ENCODE measurements at regions of chr6 and their contacts with region 1.

Region 1: DNA sequence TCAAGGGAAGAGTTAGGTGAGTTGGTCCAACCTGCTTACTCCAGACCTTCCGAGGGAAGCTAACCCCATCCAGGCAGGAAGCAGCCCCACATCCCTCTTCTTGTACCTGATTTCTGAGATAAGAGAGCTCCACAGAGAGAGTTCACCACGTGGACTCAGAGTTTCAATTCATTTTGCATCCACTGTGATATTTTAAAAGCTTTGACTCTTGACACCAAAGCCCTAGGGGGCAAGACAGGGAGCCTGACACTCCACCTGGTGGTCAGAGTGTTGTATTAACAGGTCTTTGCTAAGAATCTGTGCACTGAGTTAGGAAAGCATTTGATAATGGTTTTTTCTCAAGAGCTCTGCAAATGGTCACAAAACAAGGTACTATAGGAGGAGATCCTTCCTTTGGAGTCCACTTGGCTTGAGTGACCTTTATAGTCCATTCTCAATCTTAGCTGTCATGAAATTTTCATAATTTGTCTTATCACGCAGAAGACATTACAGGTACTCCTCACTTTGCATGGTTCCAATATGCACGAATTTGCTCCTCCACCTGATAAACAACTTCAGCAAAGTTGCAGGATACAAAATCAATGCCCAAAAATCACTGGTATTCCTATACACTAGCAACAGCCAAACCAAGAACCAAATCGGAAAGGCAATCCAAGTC is 56.2 kb upstream of the RIPOR2 start:
- DNase-seq: peak; percentile 87
- ATAC-seq: peak; percentile 97
- H3K4me3 Mint-ChIP-seq: no peak overlapping the region
- H3K27ac Mint-ChIP-seq: peak overlapping the region; percentile 67
- H3K4me1 Mint-ChIP-seq: peaks cover 27% of the 10 kb centered on the region
- H3K27me3 Mint-ChIP-seq: no peaks in the 10 kb centered on the region

Region 2: DNA sequence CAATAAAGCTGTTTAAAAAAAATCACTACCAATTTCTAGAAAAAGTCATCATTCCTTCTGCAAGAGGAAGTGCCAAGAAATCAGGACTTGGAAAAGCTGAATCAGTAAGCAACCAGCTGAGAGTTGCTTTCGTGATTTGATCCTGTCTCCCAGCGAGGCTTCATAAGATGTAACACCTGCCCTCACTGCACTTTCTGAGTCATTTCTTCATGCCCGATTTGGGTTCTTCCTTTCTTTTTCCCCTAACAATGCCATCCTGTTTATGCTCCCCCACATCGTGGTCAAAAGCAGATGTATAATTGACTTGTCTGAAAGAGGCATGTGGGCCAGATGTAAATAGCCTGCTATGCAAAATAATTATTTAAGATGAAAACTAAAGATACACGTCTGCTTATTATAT is 108.3 kb before region 1 on chr6:
- CTCF ChIA-PET with region 1: interaction called, 10 read pairs
- DNase-seq: peak; percentile 57
- ATAC-seq: peak; percentile 74
- H3K4me3 Mint-ChIP-seq: no peak overlapping the region
- H3K27ac Mint-ChIP-seq: peak overlapping the region; percentile 64
- H3K4me1 Mint-ChIP-seq: peaks cover 46% of the 10 kb centered on the region
- H3K27me3 Mint-ChIP-seq: no peaks in the 10 kb centered on the region

Region 3: DNA sequence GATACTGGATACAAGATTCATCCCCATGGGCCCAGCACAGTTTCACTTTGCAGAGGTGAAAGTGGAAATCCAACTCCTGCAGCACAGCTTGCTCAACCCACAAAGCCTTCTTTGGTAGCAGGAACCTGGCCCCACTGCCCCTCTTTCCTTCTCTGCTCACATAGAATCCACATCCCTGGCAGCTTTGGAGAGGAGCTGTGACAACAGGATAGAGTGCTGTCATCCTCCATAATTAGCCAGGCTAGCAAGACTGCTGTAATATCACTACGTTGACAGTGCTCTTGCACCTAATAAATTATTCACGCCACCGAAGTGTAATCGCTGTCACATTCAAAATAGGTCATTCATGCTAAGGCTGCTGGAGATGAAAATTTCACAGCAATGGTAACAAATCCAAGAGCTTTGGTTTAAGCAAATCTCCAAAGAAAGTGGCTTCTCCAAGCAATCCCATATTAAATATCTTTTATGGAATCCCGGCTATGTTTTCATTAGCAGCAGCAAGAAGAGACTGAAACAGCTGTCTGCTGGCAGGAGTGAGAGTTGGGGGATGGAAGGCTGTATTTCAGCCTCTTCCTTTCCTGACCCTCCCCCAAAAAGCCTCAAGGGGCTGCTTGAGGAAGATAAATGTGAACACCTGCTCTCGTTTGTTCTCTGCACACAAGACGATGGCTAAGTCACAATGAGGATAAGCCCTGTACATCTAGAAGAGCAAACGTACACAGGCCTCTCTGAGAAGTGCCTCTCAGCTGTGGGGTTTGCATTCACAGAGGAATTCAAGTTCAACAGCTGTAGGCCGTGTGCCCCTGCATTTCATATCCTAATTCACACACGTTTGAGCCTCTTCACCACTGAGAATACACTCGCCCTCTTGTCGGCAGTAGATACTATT is 72.7 kb before region 1 on chr6:
- CTCF ChIA-PET with region 1: interaction called, 14 read pairs
- DNase-seq: no peak
- ATAC-seq: peak; percentile 40
- H3K4me3 Mint-ChIP-seq: peak overlapping the region; percentile 1
- H3K27ac Mint-ChIP-seq: peak overlapping the region; percentile 47
- H3K4me1 Mint-ChIP-seq: peaks cover 67% of the 10 kb centered on the region
- H3K27me3 Mint-ChIP-seq: no peaks in the 10 kb centered on the region

Region 4: DNA sequence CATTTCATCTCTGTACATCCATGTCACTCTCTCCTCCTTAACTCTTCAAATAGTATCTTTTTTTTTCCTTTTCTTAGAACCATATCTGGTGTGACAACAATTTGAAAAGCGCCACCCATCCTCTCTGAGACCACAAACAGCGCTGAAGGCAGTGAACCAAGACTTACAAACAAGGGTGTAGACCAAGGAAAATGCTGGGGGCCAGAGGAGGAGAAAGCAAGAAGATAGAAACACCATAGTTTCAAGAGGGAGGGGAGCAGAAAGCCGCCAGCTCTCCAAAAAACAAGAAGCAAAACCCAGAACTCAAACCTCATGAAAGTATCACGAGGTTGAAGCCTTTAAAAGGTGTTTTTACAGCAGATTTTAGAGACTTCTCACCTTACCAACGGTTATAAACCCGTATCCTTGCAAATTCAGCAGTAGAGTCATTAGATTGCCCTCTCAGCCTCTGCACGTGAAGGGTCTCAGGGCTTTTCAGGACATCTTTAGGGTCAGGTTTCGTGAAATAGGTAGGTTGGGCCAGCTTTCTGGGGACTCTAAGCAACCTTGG is 42.8 kb before region 1 on chr6:
- CTCF ChIA-PET with region 1: interaction called, 24 read pairs
- DNase-seq: peak; percentile 86
- ATAC-seq: peak; percentile 69
- H3K4me3 Mint-ChIP-seq: peak overlapping the region; percentile 46
- H3K27ac Mint-ChIP-seq: peak overlapping the region; percentile 96
- H3K4me1 Mint-ChIP-seq: peaks cover 66% of the 10 kb centered on the region
- H3K27me3 Mint-ChIP-seq: no peaks in the 10 kb centered on the region

Region 5: DNA sequence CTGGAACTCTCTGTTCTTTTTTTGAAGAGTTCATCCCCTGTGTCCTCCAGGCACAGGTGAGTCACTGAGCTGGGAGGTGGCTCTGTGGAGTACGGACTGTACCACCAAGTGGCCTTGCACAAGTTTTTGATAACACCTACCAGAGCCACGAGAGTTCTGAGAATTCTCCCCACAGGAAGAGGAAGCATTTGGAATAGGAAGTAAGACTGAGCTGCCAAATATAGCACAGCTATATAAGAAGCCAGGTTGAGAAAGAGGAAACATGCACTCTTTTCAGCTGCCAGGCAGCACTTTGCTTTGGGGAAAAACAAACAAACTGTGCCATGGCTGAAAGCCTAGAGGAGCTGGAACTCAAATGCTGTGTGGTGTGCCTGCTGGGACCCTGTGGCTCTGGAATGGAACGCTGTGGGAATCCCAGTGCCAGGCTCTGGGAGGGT is 14.6 kb after region 1 on chr6:
- CTCF ChIA-PET with region 1: interaction called, 75 read pairs
- DNase-seq: peak; percentile 85
- ATAC-seq: peak; percentile 79
- H3K4me3 Mint-ChIP-seq: peak overlapping the region; percentile 38
- H3K27ac Mint-ChIP-seq: peak overlapping the region; percentile 96
- H3K4me1 Mint-ChIP-seq: peaks cover 66% of the 10 kb centered on the region
- H3K27me3 Mint-ChIP-seq: no peaks in the 10 kb centered on the region

Region 6: DNA sequence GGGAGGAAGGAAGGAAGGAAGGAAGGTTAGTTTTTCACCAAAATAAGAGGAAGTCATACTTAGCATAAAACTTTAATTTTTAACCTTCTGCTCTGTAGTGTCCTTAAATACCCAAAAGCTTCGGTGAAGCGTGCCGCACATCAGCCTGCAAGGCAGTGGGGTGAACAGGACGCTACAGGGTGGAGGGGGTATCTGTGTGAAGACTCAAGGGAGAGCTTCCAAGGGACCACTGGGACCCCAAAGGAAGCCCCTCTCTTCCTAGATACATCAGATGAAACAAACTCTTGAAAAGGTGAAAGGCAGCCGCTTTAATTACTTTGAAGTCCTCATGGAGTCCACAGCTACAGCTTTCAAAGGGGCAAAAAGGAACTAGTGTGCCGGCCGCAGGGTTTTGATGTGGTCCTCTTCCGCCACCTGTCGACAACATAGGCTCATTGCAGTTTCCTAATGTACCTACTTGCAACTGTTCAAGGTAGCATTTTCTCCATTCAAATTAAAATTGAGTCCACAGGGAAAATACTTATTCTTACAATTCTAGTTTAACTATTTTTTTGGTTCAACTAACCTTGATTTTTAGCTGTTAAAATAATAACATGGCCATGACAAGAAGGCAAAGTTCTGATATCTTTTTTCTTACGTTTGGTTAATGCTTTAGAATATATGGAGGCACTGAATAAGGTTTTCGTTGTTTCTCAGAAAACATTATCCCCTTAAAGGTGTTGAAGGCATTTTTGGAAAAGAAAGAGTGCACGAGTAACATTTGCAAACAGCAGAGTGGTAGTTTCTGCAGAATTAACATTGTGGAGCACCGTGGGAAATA is 78.8 kb after region 1 on chr6:
- CTCF ChIA-PET with region 1: interaction called, 19 read pairs
- DNase-seq: peak; percentile 89
- ATAC-seq: peak; percentile 94
- H3K4me3 Mint-ChIP-seq: peak overlapping the region; percentile 57
- H3K27ac Mint-ChIP-seq: peak overlapping the region; percentile 86
- H3K4me1 Mint-ChIP-seq: peaks cover 5% of the 10 kb centered on the region
- H3K27me3 Mint-ChIP-seq: peaks cover 6% of the 10 kb centered on the region

Region 7: GRCh38 chr6:25100288-25100687 is 108.3 kb after region 1 on chr6:
- CTCF ChIA-PET with region 1: no interaction called
- DNase-seq: no peak
- ATAC-seq: no peak
- H3K4me3 Mint-ChIP-seq: no peak overlapping the region
- H3K27ac Mint-ChIP-seq: no peak overlapping the region
- H3K4me1 Mint-ChIP-seq: peaks cover 10% of the 10 kb centered on the region
- H3K27me3 Mint-ChIP-seq: no peaks in the 10 kb centered on the region

Measured in activated CD8-positive, alpha-beta memory T cell treated with anti-CD3 and anti-CD28 coated beads, Interleukin-2, amount 10 ng/mL, durations not matched to agents 7 days and 5 days (primary cell).